Calu3 (cell line): ENCODE measurements at regions of chr6 and their contacts with region 1.

Region 1: GRCh38 chr6:77638129-77638830 is 14.6 kb upstream of the MEI4 start:
- DNase-seq: no peak
- H3K4me3 Mint-ChIP-seq: no peak overlapping the region
- H3K27ac Mint-ChIP-seq: no peak overlapping the region
- H3K4me1 Mint-ChIP-seq: no peaks in the 10 kb centered on the region
- H3K27me3 Mint-ChIP-seq: no peaks in the 10 kb centered on the region
- CTCF ChIP-seq: no peak

Region 2: GRCh38 chr6:77686931-77687330 is 48.7 kb after region 1 on chr6:
- CTCF ChIA-PET with region 1: no interaction called
- intact Hi-C with region 1: loop called (anchors 5 kb)
- DNase-seq: no peak
- H3K4me3 Mint-ChIP-seq: no peak overlapping the region
- H3K27ac Mint-ChIP-seq: no peak overlapping the region
- H3K4me1 Mint-ChIP-seq: no peaks in the 10 kb centered on the region
- H3K27me3 Mint-ChIP-seq: no peaks in the 10 kb centered on the region
- CTCF ChIP-seq: no peak